OCI-LY7 (cell line): ENCODE measurements at regions of chr5 and their contacts with region 1.

Region 1: GRCh38 chr5:16160706-16161105 is 18.9 kb downstream of the MARCHF11 start:
- DNase-seq: peak; percentile 57
- H3K4me3 ChIP-seq: no peak overlapping the region
- H3K27ac ChIP-seq: no peak overlapping the region
- H3K4me1 ChIP-seq: no peaks in the 10 kb centered on the region
- CTCF ChIP-seq: peak; percentile 87

Region 2: DNA sequence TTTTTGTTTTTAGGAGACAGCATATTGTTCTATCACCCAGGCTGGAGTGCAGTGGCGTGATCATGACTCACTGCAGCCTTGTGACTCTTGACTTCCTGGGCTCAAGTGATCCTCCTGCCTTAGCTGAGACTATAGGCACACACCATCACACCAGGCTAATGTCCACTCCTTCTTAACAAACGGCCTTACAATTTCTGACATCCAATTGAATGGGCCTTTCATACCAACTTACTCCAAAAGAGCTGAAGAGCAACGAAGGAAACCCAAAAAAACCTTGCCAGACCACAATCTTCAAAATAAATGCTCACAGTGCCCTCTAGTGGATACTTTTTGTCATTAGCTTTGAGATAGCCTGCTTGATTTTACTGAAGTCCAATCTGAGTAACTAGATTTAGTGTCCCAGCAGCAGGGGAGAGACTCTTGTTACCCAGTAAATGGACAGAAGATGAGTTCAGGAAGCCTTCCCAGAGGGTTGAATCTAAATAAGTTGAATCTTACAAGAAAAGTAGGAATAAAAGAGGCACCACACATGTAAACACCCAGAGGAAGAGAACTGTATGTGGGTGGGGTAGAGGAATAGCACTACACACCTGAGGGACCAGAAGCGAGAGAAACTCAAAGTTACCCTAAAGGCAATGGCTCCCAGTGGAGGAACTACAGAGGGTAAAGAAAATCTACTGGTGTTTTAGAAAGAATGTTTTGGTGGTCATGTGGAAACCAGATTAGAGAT is 295.6 kb after region 1 on chr5:
- CTCF ChIA-PET with region 1: interaction called, 3 read pairs
- POLR2A ChIA-PET with region 1: no interaction called
- intact Hi-C with region 1: loop called (anchors 1 kb)
- DNase-seq: peak; percentile 74
- H3K4me3 ChIP-seq: no peak overlapping the region
- H3K27ac ChIP-seq: no peak overlapping the region
- H3K4me1 ChIP-seq: no peaks in the 10 kb centered on the region
- CTCF ChIP-seq: peak; percentile 90